B cell (primary cell): ENCODE measurements at regions of chr3 and their contacts with region 1.

Region 1: DNA sequence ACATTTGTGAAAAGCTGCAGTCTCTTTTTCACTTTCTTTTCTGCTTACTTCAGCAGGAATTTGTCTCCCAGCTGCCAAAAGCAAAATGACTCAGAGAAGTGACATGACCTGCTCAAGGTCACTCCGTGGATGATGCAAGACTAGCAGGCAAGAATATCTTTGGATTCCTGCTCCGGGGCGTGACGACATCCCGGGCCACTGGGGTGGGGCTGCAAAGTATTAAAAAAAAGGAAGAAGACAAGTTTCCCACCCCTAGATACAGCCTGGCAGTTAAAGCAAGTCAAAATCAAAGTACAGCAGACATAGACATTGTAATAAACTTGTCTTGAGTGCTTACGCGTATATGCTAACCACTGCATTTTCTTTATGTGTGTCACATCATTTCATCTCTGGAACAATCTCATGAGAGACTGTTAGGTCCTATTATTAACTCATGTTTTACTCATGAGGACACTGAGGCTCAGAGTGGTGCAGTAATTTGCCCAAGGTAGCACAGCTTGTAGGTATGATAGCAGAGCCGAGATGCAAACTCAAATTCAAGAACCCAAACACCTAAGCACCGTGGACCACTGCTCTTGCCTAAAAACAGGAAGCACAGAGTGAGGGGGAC is 485.2 kb upstream of the PROK2 start:
- DNase-seq: no peak
- ATAC-seq: no peak
- H3K4me3 ChIP-seq: peak overlapping the region in 2 of 5 experiments; percentile 5 to 6
- H3K4me3 Mint-ChIP-seq: peak overlapping the region; percentile 64
- H3K27ac ChIP-seq: no peak overlapping the region
- H3K27ac Mint-ChIP-seq: no peak overlapping the region
- H3K4me1 ChIP-seq: peaks cover 78 to 83% of the 10 kb centered on the region in 2 donors
- H3K4me1 Mint-ChIP-seq: peaks cover 91% of the 10 kb centered on the region
- H3K27me3 ChIP-seq: peaks cover 0 to 9% (median 0%) of the 10 kb centered on the region in 4 experiments
- H3K27me3 Mint-ChIP-seq: peaks cover 8% of the 10 kb centered on the region
- CTCF ChIP-seq: no peak

Region 2: DNA sequence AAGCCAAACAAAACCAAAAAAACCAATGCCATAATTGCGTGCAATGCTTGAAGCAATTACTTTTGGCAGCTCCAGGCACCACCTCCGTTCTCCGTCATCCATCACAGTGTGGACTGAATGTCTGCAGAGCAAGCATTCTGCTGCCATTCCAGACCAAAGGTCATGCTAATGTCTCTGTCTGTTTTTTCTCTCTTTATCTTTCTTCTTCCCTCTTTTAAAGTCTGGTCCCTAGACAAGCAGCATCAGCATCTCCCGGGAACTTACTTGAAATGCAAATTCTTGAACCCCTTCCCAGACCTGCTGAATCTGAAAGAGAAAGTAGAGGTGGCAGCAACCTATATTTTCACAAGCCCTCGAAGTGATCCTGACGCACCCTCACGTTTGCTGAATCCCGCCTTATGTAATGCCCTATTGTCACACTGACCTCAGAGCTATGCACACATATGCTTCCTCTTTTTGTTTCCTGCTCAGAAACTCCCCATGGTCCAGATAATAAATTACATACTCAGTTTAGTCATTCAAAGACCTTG is 187.9 kb before region 1 on chr3:
- CTCF ChIA-PET with region 1: no interaction called
- POLR2A ChIA-PET with region 1: no interaction called
- intact Hi-C with region 1: loop called (anchors 5 kb)
- DNase-seq: peak; percentile 89
- ATAC-seq: peak; percentile 84
- H3K4me3 ChIP-seq: peak overlapping the region in 4 of 5 experiments; percentile 3 to 31 (median 12)
- H3K4me3 Mint-ChIP-seq: peak overlapping the region; percentile 61
- H3K27ac ChIP-seq: peak overlapping the region; percentile 43 to 66
- H3K27ac Mint-ChIP-seq: peak overlapping the region; percentile 47
- H3K4me1 ChIP-seq: peaks cover 65 to 73% of the 10 kb centered on the region in 2 donors
- H3K4me1 Mint-ChIP-seq: peaks cover 71% of the 10 kb centered on the region
- H3K27me3 ChIP-seq: peaks cover 0 to 12% (median 4%) of the 10 kb centered on the region in 4 experiments
- H3K27me3 Mint-ChIP-seq: peaks cover 8% of the 10 kb centered on the region
- CTCF ChIP-seq: no peak

Region 3: GRCh38 chr3:72177083-72178050 is 92.8 kb before region 1 on chr3:
- CTCF ChIA-PET with region 1: no interaction called
- POLR2A ChIA-PET with region 1: no interaction called
- intact Hi-C with region 1: loop called (anchors 5 kb)
- DNase-seq: peak; percentile 61
- ATAC-seq: peak; percentile 40
- H3K4me3 ChIP-seq: peak overlapping the region in 4 of 5 experiments; percentile 20 to 61 (median 36)
- H3K4me3 Mint-ChIP-seq: peak overlapping the region; percentile 88
- H3K27ac ChIP-seq: no peak overlapping the region
- H3K27ac Mint-ChIP-seq: peak overlapping the region; percentile 70
- H3K4me1 ChIP-seq: peaks cover 50 to 52% of the 10 kb centered on the region in 2 donors
- H3K4me1 Mint-ChIP-seq: peaks cover 65% of the 10 kb centered on the region
- H3K27me3 ChIP-seq: no peaks in the 10 kb centered on the region
- H3K27me3 Mint-ChIP-seq: peaks cover 13% of the 10 kb centered on the region
- CTCF ChIP-seq: no peak

Region 4: GRCh38 chr3:72288955-72289691 is 18.9 kb after region 1 on chr3:
- CTCF ChIA-PET with region 1: no interaction called
- POLR2A ChIA-PET with region 1: no interaction called
- intact Hi-C with region 1: loop called (anchors 1 kb)
- DNase-seq: peak; percentile 73
- ATAC-seq: peak; percentile 69
- H3K4me3 ChIP-seq: peak overlapping the region; percentile 17 to 69 (median 52)
- H3K4me3 Mint-ChIP-seq: peak overlapping the region; percentile 87
- H3K27ac ChIP-seq: no peak overlapping the region
- H3K27ac Mint-ChIP-seq: peak overlapping the region; percentile 5
- H3K4me1 ChIP-seq: peaks cover 10 to 21% of the 10 kb centered on the region in 2 donors
- H3K4me1 Mint-ChIP-seq: peaks cover 24% of the 10 kb centered on the region
- H3K27me3 ChIP-seq: peaks cover 0 to 14% (median 2%) of the 10 kb centered on the region in 4 experiments
- H3K27me3 Mint-ChIP-seq: peaks cover 14% of the 10 kb centered on the region
- CTCF ChIP-seq: no peak

Region 5: DNA sequence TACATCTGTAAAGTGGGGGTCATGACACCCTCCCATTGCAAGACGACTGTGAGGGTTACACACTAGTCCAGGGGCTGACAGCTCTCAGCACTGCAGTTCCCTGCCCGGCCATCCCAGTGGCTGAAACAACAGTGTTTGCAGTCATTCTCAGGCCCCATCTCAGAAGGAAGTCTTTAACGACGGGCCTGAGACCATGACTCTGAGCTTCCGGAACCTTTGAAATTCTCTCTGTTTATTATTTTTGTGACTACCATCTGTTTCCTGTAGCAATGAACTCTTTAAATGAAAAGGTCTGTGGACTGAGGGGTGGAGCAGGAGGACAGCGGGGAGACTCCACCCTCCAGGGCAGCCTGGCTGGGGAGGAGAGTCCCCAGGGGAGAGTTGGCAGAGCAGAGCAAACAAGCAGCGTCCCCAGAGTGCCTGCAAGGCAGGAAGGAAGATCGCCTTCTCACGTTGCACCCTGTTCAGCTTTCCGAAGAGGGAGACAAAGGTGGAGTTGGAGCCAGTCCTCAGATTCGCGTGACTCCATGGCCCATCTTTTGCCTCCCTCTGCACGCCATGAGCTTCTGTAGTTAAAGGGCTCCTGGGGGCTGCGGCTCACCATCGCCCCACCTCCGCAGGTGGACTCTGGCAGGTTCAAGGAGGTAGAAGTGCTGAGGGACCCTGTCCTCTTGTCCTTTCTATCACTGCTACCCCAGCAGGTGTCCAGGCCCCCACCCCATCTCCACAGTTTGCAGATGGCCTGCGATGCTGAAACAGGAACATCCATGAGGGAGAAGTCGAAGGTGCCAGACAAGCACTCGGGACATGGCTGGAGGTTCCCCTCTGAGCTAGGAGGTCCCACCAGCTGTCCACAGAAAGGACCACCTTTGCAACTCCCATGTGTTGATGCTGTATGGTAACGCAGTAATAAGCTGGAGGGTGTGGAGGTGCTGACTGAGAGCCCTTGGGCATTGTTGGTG is 40.5 kb after region 1 on chr3:
- CTCF ChIA-PET with region 1: no interaction called
- POLR2A ChIA-PET with region 1: no interaction called
- intact Hi-C with region 1: loop called (anchors 1 kb)
- DNase-seq: peak; percentile 89
- ATAC-seq: peak; percentile 98
- H3K4me3 ChIP-seq: peak overlapping the region; percentile 7 to 53 (median 18)
- H3K4me3 Mint-ChIP-seq: peak overlapping the region; percentile 82
- H3K27ac ChIP-seq: peak overlapping the region; percentile 76 to 88
- H3K27ac Mint-ChIP-seq: peak overlapping the region; percentile 90
- H3K4me1 ChIP-seq: peaks cover 42 to 46% of the 10 kb centered on the region in 2 donors
- H3K4me1 Mint-ChIP-seq: peaks cover 55% of the 10 kb centered on the region
- H3K27me3 ChIP-seq: no peaks in the 10 kb centered on the region
- H3K27me3 Mint-ChIP-seq: no peaks in the 10 kb centered on the region
- CTCF ChIP-seq: no peak